Natural killer cell (primary cell): ENCODE measurements at regions of chr2 and their contacts with region 1.

Region 1: GRCh38 chr2:42810121-42810970 is 18.0 kb upstream of the HAAO start:
- DNase-seq: peak; percentile 98 to 99
- ATAC-seq: peak; percentile 78 to 92 (median 83)
- H3K4me3 ChIP-seq: peak overlapping the region; percentile 80
- H3K4me3 Mint-ChIP-seq: peak overlapping the region; percentile 96
- H3K27ac ChIP-seq: peak overlapping the region; percentile 95
- H3K27ac Mint-ChIP-seq: peak overlapping the region; percentile 98 to 99
- H3K4me1 ChIP-seq: peaks cover 21% of the 10 kb centered on the region
- H3K4me1 Mint-ChIP-seq: peaks cover 28 to 30% of the 10 kb centered on the region in 2 donors
- H3K27me3 ChIP-seq: no peaks in the 10 kb centered on the region
- H3K27me3 Mint-ChIP-seq: peaks cover 3 to 5% of the 10 kb centered on the region in 2 donors
- CTCF ChIP-seq: peak; percentile 7

Region 2: GRCh38 chr2:42878581-42878980 is 68.2 kb after region 1 on chr2:
- intact Hi-C with region 1: no loop called
- DNase-seq: no peak
- ATAC-seq: no peak
- H3K4me3 ChIP-seq: no peak overlapping the region
- H3K4me3 Mint-ChIP-seq: no peak overlapping the region
- H3K27ac ChIP-seq: no peak overlapping the region
- H3K27ac Mint-ChIP-seq: no peak overlapping the region
- H3K4me1 ChIP-seq: no peaks in the 10 kb centered on the region
- H3K4me1 Mint-ChIP-seq: no peaks in the 10 kb centered on the region
- H3K27me3 ChIP-seq: no peaks in the 10 kb centered on the region
- H3K27me3 Mint-ChIP-seq: no peaks in the 10 kb centered on the region
- CTCF ChIP-seq: no peak

Region 3: DNA sequence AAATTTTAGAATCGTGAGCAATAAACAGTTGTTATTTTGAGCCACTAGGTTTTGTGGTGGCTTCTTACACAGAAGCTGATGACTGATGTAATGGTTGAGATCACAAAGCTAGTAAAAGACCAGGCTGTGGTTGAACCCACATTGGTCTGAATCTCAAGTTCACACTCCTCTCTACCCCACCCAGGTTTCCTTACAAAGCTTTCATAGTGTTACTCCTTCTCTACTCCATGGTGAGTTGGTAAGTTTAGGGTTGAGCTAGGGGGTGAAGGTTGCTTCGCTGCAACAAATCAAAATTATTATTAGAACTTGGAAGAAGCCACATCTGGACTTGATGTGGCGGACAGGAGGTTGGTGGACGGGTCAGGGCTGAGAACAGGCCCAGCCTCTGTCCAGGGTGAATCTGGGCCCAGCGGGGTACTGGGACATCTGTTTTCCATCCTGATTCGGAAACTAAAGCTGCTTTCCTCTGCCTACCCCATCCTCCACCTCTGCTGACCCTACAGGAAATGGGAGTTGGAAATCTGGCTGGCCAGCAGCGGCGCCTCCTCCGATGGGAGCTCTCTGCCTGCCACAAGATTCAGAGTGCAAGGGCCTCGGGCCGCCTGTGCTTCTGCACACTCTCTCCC is 329.8 kb after region 1 on chr2:
- intact Hi-C with region 1: loop called (anchors 5 kb)
- DNase-seq: peak in 1 of 2 donors; percentile 80
- ATAC-seq: peak; percentile 52 to 72 (median 65)
- H3K4me3 ChIP-seq: no peak overlapping the region
- H3K4me3 Mint-ChIP-seq: peak overlapping the region; percentile 87
- H3K27ac ChIP-seq: peak overlapping the region; percentile 97
- H3K27ac Mint-ChIP-seq: peak overlapping the region; percentile 87 to 96
- H3K4me1 ChIP-seq: peaks cover 86% of the 10 kb centered on the region
- H3K4me1 Mint-ChIP-seq: peaks cover 61 to 74% of the 10 kb centered on the region in 2 donors
- H3K27me3 ChIP-seq: no peaks in the 10 kb centered on the region
- H3K27me3 Mint-ChIP-seq: no peaks in the 10 kb centered on the region
- CTCF ChIP-seq: no peak

Region 4: DNA sequence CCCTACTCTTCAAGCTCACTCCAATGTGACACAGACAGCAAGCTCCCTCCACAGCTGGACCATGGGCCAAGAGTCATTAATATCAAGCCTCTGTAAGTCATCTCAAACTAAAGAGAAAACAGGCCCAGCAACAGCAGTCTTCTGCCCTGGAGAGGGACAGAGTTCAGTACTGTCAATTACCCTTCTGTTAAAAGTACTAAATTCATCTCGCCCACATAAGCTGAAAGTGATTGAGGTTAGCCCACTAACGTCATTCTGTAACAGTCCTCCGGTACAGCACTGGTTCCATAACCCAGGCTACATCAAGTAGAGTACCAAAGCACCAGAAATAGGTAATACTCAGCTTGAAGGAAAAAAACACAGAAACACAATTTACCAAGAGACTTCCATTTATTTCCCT is 759.6 kb after region 1 on chr2:
- intact Hi-C with region 1: no loop called
- DNase-seq: peak in 1 of 2 donors; percentile 18
- ATAC-seq: no peak
- H3K4me3 ChIP-seq: no peak overlapping the region
- H3K4me3 Mint-ChIP-seq: no peak overlapping the region
- H3K27ac ChIP-seq: no peak overlapping the region
- H3K27ac Mint-ChIP-seq: no peak overlapping the region
- H3K4me1 ChIP-seq: no peaks in the 10 kb centered on the region
- H3K4me1 Mint-ChIP-seq: peaks cover 0 to 5% of the 10 kb centered on the region in 2 donors
- H3K27me3 ChIP-seq: no peaks in the 10 kb centered on the region
- H3K27me3 Mint-ChIP-seq: no peaks in the 10 kb centered on the region
- CTCF ChIP-seq: no peak

Region 5: DNA sequence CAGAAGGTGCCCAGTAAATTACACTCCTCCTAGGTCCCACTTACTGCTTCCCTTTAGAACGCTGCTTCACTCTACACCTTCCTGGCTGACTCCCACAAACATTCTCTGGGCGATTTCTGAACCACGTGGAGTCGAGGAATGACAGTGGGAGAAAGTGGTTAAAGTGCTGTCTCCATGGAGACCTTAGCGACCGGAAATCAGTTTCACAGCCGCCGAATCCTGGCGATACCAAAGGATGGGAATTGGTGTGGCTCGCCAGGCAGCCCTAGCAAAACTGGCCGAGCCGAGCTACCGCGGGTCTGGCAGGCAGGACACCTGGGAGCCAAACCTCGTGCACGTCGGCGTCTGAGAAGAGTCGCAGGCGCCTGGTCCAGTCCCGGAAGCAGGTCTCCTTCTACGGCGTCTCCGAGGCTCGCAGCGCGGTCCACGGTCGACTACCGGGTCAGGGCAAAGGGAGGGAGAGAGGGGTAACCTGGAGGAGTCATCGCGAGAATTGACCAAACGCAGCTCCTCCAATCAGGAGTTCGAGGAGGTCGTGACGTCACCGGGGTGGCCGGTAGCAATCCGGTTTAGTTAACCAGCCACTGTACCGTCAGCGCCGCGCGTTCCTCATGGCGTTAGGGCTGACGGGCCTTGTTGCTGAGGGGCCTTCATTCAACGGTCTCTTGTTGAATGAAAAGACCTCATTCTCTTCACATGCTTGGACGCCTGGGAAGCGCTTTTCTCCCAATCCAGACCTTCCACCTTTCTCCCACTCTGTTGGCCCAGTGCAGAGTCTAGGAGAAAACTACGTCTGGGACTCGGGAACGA is 785.5 kb after region 1 on chr2 and contains the start of gene THADA:
- intact Hi-C with region 1: loop called (anchors 1 kb)
- DNase-seq: peak; percentile 96 to 98
- ATAC-seq: peak; percentile 97 to 99 (median 97)
- H3K4me3 ChIP-seq: peak within 1 kb of the TSS; percentile 94
- H3K4me3 Mint-ChIP-seq: peak within 1 kb of the TSS; percentile 88
- H3K27ac ChIP-seq: peak within 1 kb of the TSS; percentile 85
- H3K27ac Mint-ChIP-seq: peak within 1 kb of the TSS; percentile 94 to 97
- H3K4me1 ChIP-seq: peaks cover 15% of the 10 kb centered on the region
- H3K4me1 Mint-ChIP-seq: peaks cover 23 to 24% of the 10 kb centered on the region in 2 donors
- H3K27me3 ChIP-seq: no peaks in the 10 kb centered on the region
- H3K27me3 Mint-ChIP-seq: peaks cover 23% of the 10 kb centered on the region in 2 donors
- CTCF ChIP-seq: no peak
- total RNA-seq, gene THADA: 34.1 to 35.7 (median 35.3) TPM